HepG2 (cell line): ENCODE measurements at regions of chr2 and their contacts with region 1.

Region 1: GRCh38 chr2:35114765-35115164 is 1240.8 kb upstream of the CRIM1 start:
- DNase-seq: peak; percentile 7
- ATAC-seq: peak; percentile 64
- H3K4me3 ChIP-seq: no peak overlapping the region
- H3K27ac ChIP-seq: no peak overlapping the region
- H3K4me1 ChIP-seq: no peaks in the 10 kb centered on the region
- H3K27me3 ChIP-seq: no peaks in the 10 kb centered on the region
- CTCF ChIP-seq: no peak; the same call in 1 of the 2 replicates
- EP300 ChIP-seq: no peak
- POLR2A ChIP-seq: no peak
- RAD21 ChIP-seq: no peak

Region 2: GRCh38 chr2:34096562-34097171 is 1018.1 kb before region 1 on chr2:
- CTCF ChIA-PET with region 1: no interaction called
- POLR2A ChIA-PET with region 1: no interaction called
- in situ Hi-C with region 1: no loop called
- intact Hi-C with region 1: loop called (anchors 1 kb)
- DNase-seq: peak; percentile 53
- ATAC-seq: peak; percentile 93
- H3K4me3 ChIP-seq: no peak overlapping the region
- H3K27ac ChIP-seq: no peak overlapping the region
- H3K4me1 ChIP-seq: no peaks in the 10 kb centered on the region
- H3K27me3 ChIP-seq: no peaks in the 10 kb centered on the region
- CTCF ChIP-seq: peak; percentile 81
- EP300 ChIP-seq: no peak
- POLR2A ChIP-seq: no peak
- RAD21 ChIP-seq: peak; percentile 52; the same call in 1 of the 2 replicates